PC-3 (cell line): ENCODE measurements at regions of chr13 and their contacts with region 1.

Region 1: DNA sequence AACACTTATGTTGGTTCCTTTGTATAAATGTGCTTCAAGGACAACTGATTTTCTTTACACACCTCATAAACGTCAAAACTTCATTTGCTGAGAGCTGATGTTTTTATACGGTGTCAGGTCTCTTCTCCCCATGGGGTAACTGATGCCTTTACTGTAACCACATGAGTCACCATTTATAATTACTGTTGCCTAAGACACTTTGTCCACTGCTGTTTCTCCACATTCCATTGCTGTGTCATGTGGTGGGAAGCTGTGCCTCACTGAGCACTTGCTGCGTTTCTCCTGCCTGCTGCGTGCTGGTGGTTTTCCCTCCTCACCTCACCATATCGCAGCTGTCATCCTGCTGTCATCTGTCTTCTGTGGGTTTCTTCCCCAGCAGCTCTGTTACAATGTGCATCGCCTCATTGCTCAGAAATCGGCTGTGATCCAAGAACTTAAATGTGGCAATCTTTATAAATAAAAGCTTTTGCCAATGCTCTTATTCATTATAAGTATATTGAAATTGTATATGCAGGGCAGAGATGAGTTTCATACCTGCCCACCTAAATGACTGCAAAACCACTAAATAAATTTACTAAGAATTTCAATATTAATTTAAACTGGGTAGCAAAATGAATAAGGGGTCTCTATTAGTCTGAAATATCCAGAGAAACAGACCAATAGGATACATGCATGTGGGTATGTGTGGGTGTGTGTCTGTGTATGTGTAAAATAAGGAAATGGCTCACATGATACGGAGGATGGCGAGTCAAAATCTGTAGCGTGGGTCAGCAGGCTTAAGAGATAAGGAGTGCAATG is 547.0 kb upstream of the SLITRK5 start:
- DNase-seq: peak; percentile 90
- ATAC-seq: peak; percentile 96
- H3K4me3 ChIP-seq: peak overlapping the region; percentile 54
- H3K27ac ChIP-seq: peak overlapping the region; percentile 77
- H3K4me1 ChIP-seq: peaks cover 23% of the 10 kb centered on the region
- H3K27me3 ChIP-seq: no peaks in the 10 kb centered on the region
- CTCF ChIP-seq: no peak

Region 2: DNA sequence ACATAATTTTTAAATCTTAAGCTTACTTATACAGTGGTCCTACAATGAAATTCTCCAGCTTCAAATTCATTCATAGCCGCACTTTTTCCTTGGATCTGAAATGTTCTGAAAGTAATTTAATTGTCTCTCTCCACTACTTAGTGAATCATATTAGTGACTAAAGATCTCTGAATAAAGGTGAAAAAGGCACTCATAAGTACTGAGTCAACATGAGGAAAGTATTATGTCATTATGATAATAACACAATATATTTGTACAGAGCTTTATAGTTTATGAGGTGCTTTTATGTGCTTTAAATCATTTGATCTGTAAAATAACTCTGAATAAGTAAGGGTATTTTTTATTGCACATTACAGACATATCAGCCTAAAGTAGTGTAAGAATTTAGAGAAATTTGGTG is 81.2 kb before region 1 on chr13:
- CTCF ChIA-PET with region 1: no interaction called
- POLR2A ChIA-PET with region 1: no interaction called
- intact Hi-C with region 1: loop called (anchors 5 kb)
- DNase-seq: peak; percentile 71
- ATAC-seq: peak; percentile 96
- H3K4me3 ChIP-seq: no peak overlapping the region
- H3K27ac ChIP-seq: peak overlapping the region; percentile 37
- H3K4me1 ChIP-seq: peaks cover 12% of the 10 kb centered on the region
- H3K27me3 ChIP-seq: no peaks in the 10 kb centered on the region
- CTCF ChIP-seq: no peak

Region 3: DNA sequence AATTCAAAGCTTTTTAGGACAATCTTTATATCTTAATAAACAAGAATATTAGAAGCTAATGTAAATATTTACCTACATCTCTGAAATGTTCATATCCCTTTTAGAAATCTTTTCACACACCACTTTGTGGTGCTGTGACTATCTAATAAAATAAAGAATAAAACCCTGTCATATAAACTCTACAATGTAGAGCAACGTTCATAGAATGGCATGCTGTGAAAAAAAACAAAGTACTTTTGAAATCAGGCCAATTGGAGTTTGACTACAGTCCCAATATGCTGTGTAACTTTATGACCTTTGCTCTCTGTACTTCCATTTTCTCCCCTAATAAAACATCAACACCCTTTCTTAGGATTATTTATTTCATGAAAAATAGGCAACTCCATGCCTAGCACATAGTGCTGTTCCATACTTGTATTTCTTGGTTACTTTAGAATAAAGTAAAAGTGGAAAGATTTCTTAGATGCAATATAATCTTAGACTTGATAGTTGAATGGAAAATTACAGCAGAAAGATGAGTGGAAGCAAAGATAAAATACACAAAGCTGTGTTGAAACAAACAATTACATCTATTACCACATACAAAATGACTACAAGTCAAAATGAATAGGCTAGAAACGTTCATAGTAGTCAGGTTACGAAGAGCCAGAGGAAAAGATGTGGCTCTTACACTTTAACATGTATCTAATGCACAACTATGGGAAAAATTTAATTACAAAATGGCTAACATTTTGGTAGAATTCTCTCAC is 66.2 kb before region 1 on chr13:
- CTCF ChIA-PET with region 1: no interaction called
- POLR2A ChIA-PET with region 1: no interaction called
- intact Hi-C with region 1: loop called (anchors 5 kb)
- DNase-seq: peak; percentile 20
- ATAC-seq: peak; percentile 60
- H3K4me3 ChIP-seq: no peak overlapping the region
- H3K27ac ChIP-seq: no peak overlapping the region
- H3K4me1 ChIP-seq: peaks cover 4% of the 10 kb centered on the region; the same call in 1 of the 2 replicates
- H3K27me3 ChIP-seq: no peaks in the 10 kb centered on the region
- CTCF ChIP-seq: no peak

Region 4: GRCh38 chr13:87093399-87093798 is 30.8 kb before region 1 on chr13:
- CTCF ChIA-PET with region 1: no interaction called
- POLR2A ChIA-PET with region 1: no interaction called
- intact Hi-C with region 1: loop called (anchors 1 kb)
- DNase-seq: peak; percentile 77
- ATAC-seq: peak; percentile 99
- H3K4me3 ChIP-seq: no peak overlapping the region; the same call in 1 of the 2 replicates
- H3K27ac ChIP-seq: peak overlapping the region; percentile 80
- H3K4me1 ChIP-seq: peaks cover 19% of the 10 kb centered on the region
- H3K27me3 ChIP-seq: no peaks in the 10 kb centered on the region
- CTCF ChIP-seq: no peak